Activated CD4-positive, alpha-beta T cell treated with anti-CD3 and anti-CD28 coated beads, Interleukin-2, amount 10 ng/mL, durations not matched to agents 24 days and 14 days (primary cell): ENCODE measurements at regions of chr3 and their contacts with region 1.

Region 1: DNA sequence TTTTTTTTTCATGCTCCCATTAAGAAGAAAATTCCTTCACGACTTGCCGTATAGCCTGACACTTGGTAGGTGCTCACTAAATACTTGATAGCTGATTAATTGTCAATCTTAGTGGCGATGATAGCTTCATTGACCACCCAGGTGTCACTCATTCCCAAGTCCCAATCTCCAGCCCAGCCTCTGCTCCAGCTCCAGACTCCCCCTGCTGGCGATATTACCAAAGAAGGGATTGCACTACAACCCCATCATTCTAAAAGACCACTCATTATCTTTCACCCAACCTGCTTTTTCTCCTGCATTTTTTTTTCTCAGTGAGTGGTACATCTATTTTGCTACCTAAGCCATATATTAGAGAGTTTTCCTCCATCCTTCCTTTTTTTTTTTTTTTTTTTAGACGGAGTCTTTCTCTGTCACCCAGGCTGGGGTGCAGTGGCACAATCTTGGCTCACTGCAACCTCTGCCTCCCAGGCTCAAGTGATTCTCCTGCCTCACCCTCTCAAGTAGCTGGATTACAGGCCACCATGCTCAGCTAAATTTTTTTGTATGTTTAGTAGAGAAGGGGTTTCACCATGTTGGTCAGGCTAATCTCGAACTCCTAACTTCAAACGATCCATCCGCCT is 19.5 kb upstream of the COMMD2 start:
- DNase-seq: peak; percentile 80
- H3K4me3 Mint-ChIP-seq: no peak overlapping the region
- H3K27ac Mint-ChIP-seq: no peak overlapping the region
- H3K4me1 Mint-ChIP-seq: no peaks in the 10 kb centered on the region
- H3K27me3 Mint-ChIP-seq: peaks cover 15% of the 10 kb centered on the region

Region 2: GRCh38 chr3:149534671-149535332 is 237.0 kb before region 1 on chr3:
- intact Hi-C with region 1: loop called (anchors 5 kb)
- DNase-seq: no peak
- H3K4me3 Mint-ChIP-seq: no peak overlapping the region
- H3K27ac Mint-ChIP-seq: no peak overlapping the region
- H3K4me1 Mint-ChIP-seq: peaks cover 5% of the 10 kb centered on the region
- H3K27me3 Mint-ChIP-seq: peaks cover 6% of the 10 kb centered on the region

Region 3: DNA sequence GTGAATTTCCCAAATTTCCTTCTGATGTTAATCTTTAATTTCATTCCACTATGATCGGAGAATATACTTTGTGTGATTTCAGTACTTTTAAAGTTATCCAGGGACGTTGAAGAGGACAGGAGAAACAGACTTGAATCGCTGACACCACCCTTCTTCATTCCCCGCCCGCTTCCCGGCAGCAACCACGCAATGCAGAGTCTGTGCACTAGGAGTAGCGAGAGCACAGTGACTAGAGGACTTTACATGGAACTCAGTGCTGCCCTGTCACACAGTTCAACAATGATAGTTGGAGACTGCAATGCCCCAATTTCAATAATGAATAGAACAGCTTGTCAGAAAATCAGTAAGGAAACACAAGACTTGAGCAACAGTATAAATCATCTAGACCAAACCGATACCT is 115.2 kb after region 1 on chr3:
- intact Hi-C with region 1: no loop called
- DNase-seq: no peak
- H3K4me3 Mint-ChIP-seq: no peak overlapping the region
- H3K27ac Mint-ChIP-seq: no peak overlapping the region
- H3K4me1 Mint-ChIP-seq: peaks cover 12% of the 10 kb centered on the region
- H3K27me3 Mint-ChIP-seq: no peaks in the 10 kb centered on the region